Tibial artery (tissue), 4 donors: ENCODE measurements at regions of chr2 and their contacts with region 1.

Region 1: GRCh38 chr2:57516698-57517340 is 529.8 kb upstream of the VRK2 start:
- DNase-seq: no peak
- H3K4me3 ChIP-seq: no peak overlapping the region
- H3K27ac ChIP-seq: no peak overlapping the region
- H3K4me1 ChIP-seq: no peaks in the 10 kb centered on the region
- H3K27me3 ChIP-seq: no peaks in the 10 kb centered on the region
- CTCF ChIP-seq: peak; percentile 53 to 59

Region 2: GRCh38 chr2:56183643-56184499 is 1332.9 kb before region 1 on chr2 and contains the start of gene CCDC85A:
- intact Hi-C with region 1: loop called (anchors 10 kb)
- DNase-seq: peak; percentile 83 to 88
- H3K4me3 ChIP-seq: peak within 1 kb of the TSS; percentile 55 to 66
- H3K27ac ChIP-seq: peak within 1 kb of the TSS in 1 of 2 donors; percentile 23
- H3K4me1 ChIP-seq: peaks cover 0 to 29% (median 20%) of the 10 kb centered on the region in 4 donors
- H3K27me3 ChIP-seq: peaks cover 0 to 28% of the 10 kb centered on the region in 2 donors
- CTCF ChIP-seq: peak; percentile 85 to 94

Region 3: DNA sequence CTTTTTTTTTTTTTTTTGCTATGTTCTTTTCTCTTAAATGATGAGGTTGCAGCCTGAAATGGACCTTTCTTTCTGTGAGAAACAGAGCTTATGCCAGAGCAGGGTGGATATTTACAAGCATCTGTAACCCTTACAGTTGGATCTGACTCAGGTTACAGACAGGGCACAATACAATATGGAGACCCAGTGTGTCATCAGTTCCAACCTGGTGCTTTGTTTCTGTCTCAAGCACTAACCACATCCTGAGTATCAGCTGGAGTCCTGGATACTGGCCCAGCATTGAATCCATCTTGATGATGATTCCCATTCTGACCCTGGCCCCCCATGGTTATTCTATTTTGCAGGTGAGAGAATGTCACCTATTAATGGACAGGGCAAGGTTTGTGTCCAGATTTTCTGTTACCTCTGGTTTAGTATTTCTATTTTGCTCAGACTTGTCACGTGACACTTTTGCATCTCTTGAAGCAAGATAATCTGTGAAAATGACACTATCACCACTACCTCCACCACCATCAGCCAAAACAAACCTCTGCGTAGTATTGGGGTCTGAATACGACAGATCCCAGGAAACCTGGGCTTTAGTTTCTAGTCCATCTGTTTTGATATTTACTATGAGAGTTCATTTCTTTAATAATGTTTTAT is 1159.0 kb before region 1 on chr2:
- intact Hi-C with region 1: loop called (anchors 5 kb)
- DNase-seq: no peak
- H3K4me3 ChIP-seq: no peak overlapping the region
- H3K27ac ChIP-seq: no peak overlapping the region
- H3K4me1 ChIP-seq: no peaks in the 10 kb centered on the region
- H3K27me3 ChIP-seq: no peaks in the 10 kb centered on the region
- CTCF ChIP-seq: no peak

Region 4: DNA sequence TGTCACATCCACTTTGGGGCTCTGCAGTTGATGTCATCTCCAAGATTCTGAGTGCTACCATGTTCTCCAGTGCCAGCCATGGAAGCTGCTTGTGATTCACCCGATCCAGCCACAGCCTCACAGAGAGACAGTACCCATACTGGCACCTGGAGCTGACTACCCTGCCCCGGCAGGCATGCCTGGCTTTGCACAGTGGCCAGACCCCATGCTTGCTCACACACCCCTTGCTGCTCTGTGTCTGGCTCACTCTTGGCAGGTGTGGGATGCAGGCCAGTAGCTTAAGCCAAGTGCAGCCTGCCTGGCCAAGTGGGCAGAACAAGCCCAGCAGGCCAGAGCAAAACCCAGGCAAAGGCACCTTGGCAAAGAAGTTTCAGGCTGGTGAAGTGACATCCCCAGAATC is 298.6 kb before region 1 on chr2:
- intact Hi-C with region 1: no loop called
- DNase-seq: no peak
- H3K4me3 ChIP-seq: no peak overlapping the region
- H3K27ac ChIP-seq: no peak overlapping the region
- H3K4me1 ChIP-seq: no peaks in the 10 kb centered on the region
- H3K27me3 ChIP-seq: no peaks in the 10 kb centered on the region
- CTCF ChIP-seq: no peak